HCT116 (cell line): ENCODE measurements at regions of chr9 and their contacts with region 1.

Region 1: DNA sequence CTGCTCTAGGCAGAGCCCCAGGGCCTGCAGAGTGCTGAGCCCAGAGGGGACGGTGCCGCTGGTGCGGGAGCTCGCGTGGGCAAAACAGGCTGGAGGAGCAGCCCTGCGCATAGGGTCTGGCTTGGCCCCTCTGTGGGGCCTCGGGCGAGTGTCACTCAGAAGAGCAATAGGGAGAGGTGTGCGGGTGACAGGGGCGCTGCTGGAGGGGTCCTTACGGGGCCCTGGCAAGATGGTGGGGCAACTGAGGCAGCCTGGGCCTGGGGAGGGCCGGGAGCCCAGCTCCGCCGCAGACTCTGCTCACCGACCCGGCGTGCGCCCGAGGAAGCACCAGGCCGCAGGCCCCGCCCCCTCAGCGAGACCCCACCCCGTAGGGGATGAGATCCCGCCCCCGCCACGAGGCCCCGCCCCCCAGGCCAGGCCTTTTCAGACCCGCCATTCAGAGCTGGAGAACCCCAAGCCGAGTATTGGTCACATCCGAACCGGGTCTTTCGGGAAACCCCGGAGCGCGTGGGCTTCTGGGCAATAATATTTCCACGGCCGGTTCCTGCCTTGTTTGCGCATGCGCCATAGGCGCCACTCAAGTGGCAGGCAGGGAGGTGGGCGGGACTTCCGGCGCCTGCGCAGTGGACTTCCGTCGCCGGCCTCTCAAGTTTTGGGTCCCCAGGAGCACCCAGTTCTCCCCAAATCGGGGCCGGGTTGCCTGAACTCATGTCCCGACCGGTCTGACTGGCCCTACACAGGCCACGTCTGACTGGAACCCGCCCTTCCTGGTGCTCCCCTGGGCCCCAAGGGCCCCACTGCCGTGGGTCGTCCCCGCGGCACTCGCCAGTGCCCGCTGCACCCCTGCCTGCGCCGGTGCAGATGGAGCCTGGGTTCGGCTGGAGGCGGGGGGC is 1.3 kb upstream of the RNF208 start:
- DNase-seq: peak; percentile 97
- ATAC-seq: peak; percentile 69
- H3K4me3 ChIP-seq: peak overlapping the region; percentile 82 to 99
- H3K27ac ChIP-seq: peak overlapping the region; percentile 98
- H3K4me1 ChIP-seq: peaks cover 48 to 79% of the 10 kb centered on the region in 2 experiments
- H3K27me3 ChIP-seq: no peaks in the 10 kb centered on the region
- CTCF ChIP-seq: no peak
- POLR2A ChIP-seq: peak; percentile 58
- RAD21 ChIP-seq: no peak

Region 2: DNA sequence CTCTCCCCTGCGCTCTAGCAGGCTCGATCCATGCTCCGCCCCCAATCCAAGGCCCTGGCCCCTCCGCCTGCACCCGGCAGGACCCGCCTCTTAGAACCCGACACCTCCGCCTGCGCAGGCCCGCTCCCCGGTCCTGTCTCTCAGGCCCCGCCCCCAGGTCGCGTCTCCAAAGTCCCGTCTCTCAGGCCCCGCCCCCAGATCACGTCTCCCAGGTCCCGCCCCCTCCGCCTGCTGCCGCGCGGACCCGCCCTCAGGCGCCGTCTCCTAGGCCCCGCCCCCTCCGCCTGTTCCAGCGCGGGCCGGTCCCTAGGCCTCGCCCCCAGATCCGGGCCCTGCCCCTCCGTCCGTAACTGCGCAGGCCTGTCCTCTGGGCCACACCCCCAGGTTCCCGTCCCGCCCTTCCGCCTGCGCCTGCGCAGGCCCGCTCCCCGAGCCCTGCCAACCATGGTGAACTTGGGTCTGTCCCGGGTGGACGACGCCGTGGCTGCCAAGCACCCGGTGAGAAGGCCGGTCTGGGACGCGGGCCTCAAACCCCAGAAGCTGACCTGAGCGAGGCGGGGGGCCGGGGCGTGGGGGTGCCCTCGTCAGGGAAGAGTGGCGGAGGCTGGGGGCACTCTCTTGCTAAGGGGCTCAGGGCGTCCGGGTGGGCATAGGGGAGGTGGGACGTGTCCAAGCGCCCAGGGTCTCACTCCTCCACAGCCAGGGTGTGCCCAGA is 432.2 kb before region 1 on chr9 and contains the start of gene TMEM141:
- CTCF ChIA-PET with region 1: no interaction called
- POLR2A ChIA-PET with region 1: no interaction called
- RAD21 ChIA-PET with region 1: no interaction called
- intact Hi-C with region 1: loop called (anchors 10 kb)
- DNase-seq: peak; percentile 98
- ATAC-seq: peak; percentile 88
- H3K4me3 ChIP-seq: peak within 1 kb of the TSS; percentile 83 to 84
- H3K27ac ChIP-seq: peak within 1 kb of the TSS; percentile 79
- H3K4me1 ChIP-seq: peaks cover 14 to 40% of the 10 kb centered on the region in 2 experiments; a peak in 3 of 4 replicates
- H3K27me3 ChIP-seq: no peaks in the 10 kb centered on the region
- CTCF ChIP-seq: no peak
- POLR2A ChIP-seq: peak; percentile 46
- RAD21 ChIP-seq: no peak
- total RNA-seq, gene TMEM141: 73.6 TPM

Region 3: DNA sequence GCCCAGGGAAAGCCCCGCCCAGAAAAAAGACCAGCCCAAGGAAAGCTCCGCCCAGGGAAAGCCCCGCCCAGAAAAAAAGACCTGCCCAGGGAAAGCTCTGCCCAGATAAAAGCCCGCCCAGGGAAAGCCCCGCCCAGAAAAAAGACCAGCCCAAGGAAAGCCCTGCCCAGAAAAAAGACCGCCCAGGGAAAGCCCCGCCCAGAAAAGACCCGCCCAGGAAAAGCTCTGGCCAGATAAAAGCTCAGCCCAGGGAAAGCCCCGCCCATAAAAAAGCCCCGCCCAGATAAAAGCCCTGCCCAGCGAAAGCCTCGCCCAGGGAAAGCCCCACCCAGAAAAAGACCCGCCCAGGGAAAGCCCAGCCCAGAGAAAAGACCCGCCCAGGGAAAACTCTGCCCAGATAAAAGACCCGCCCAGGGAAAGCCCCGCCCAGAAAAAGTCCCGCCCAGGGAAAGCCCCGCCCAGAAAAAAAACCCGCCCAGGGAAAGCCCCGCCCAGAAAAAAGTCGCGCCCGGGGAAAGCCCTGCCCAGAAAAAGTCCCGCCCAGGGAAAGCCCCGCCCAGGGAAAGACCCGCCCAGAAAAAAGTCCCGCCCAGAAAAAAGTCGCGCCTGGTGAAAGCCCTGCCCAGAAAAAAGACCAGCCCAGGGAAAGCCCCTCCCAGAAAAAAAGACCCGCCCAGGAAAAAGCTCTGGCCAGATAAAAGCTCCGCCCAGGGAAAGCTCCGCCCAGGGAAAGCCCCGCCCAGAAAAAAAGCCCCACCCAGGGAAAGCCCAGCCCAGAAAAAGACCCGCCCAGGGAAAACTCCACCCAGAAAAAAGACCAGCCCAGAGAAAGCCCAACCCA is 72.5 kb before region 1 on chr9:
- CTCF ChIA-PET with region 1: interaction called, 13 read pairs
- POLR2A ChIA-PET with region 1: no interaction called
- RAD21 ChIA-PET with region 1: no interaction called
- intact Hi-C with region 1: no loop called
- DNase-seq: peak; percentile 79
- ATAC-seq: peak; percentile 75
- H3K4me3 ChIP-seq: no peak overlapping the region
- H3K27ac ChIP-seq: peak overlapping the region; percentile 47; the same call in 1 of the 2 replicates
- H3K4me1 ChIP-seq: peaks cover 12 to 22% of the 10 kb centered on the region in 2 experiments
- H3K27me3 ChIP-seq: no peaks in the 10 kb centered on the region
- CTCF ChIP-seq: no peak
- POLR2A ChIP-seq: no peak
- RAD21 ChIP-seq: no peak

Region 4: GRCh38 chr9:137162505-137163100 is 60.7 kb before region 1 on chr9:
- CTCF ChIA-PET with region 1: interaction called, 8 read pairs
- POLR2A ChIA-PET with region 1: interaction called, 6 read pairs
- RAD21 ChIA-PET with region 1: interaction called, 3 read pairs
- intact Hi-C with region 1: loop called (anchors 2 kb)
- DNase-seq: no peak
- ATAC-seq: peak; percentile 50
- H3K4me3 ChIP-seq: peak overlapping the region; percentile 59 to 70
- H3K27ac ChIP-seq: peak overlapping the region; percentile 82
- H3K4me1 ChIP-seq: peaks cover 8 to 52% of the 10 kb centered on the region in 2 experiments; a peak in 3 of 4 replicates
- H3K27me3 ChIP-seq: no peaks in the 10 kb centered on the region
- CTCF ChIP-seq: no peak; a peak in 1 of 6 replicates
- POLR2A ChIP-seq: no peak
- RAD21 ChIP-seq: no peak

Region 5: DNA sequence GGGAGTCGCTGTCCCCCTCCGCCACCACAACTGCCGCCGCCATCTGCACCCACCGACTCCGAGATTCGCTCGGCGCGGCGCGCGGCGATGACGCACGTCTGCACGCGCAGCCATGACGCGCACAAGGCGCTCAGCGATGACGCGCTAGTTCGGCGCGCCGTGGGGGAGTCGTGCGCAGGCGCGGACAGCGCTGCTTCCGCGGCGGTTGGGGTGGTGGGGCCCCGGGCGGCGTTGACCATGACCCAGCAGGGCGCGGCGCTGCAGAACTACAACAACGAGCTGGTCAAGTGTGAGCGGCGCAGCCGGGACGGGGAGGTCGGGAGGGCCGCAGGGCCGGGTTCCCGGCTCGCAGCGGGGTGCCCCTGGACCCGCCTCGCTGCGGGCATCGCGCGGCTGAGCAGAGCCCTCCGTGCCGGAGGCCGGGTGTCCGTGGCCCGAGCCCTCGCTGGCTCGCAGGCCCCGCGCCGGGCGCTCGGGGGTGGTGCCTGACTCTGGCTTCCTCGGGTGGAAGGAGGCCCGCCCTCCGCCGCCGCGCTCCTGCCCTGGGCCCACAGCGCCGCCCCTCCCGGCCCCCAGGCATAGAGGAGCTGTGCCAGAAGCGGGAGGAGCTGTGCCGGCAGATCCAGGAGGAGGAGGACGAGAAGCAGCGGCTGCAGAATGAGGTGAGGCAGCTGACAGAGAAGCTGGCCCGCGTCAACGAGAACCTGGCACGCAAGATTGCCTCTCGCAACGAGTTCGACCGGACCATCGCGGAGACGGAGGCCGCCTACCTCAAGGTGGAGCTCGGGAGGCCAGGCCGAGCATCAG is 34.6 kb before region 1 on chr9 and contains the starts of genes ANAPC2 and SSNA1:
- CTCF ChIA-PET with region 1: interaction called, 17 read pairs
- POLR2A ChIA-PET with region 1: interaction called, 8 read pairs
- RAD21 ChIA-PET with region 1: interaction called, 7 to 9 read pairs
- intact Hi-C with region 1: loop called (anchors 5 kb)
- DNase-seq: peak; percentile 89
- ATAC-seq: peak; percentile 84
- H3K4me3 ChIP-seq: peak within 1 kb of the TSS; percentile 98 to 100
- H3K27ac ChIP-seq: peak within 1 kb of the TSS; percentile 99
- H3K4me1 ChIP-seq: peaks cover 16 to 33% of the 10 kb centered on the region in 2 experiments
- H3K27me3 ChIP-seq: no peaks in the 10 kb centered on the region
- CTCF ChIP-seq: peak in 2 of 3 experiments; percentile 32 to 38; a peak in 3 of 6 replicates
- POLR2A ChIP-seq: peak; percentile 90
- RAD21 ChIP-seq: no peak
- total RNA-seq, gene ANAPC2: 75.5 TPM
- total RNA-seq, gene SSNA1: 84.7 TPM

Region 6: DNA sequence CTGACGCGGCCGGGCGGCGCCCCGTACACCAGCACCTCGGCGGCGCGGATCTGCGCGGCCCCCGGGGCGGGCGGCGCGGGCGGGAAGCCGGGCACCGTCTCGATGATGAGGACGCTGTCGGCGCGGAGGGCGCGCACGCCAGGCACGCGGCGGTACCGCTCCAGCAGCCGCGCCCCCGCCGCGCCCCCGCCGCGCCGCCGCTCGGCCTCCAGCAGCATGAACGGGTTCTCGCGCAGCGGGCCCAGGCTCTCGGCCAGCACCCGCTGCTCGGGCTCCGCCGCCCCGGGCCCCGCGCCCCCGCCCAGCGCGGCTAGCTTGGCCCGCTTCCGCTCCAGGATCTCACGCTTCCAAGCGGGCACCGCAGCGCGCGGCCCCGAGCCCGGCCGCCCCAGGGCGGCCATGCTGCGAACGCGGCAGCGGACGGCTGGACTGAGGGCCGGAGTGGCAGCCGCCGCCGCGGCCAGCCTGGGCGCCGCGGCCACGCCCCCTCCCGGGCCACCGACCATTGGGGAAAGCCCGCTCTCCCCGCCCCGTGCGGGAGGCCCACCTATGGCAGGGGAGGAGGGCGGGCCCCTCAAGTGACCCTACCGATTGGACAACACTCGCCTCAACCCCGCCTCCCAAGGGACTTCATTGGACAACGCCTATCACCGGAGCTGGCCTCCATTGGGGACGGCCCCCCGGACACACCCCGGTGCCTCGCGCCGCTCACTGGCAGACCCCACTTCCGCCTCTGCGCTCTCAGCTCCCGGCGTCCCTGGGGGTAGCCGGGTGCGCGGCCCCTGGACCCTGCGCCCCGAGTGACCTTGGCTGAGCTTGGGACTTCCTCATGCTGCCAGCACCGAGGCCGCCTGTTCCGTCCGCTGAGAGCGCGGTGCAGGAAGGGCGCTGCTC is 22.8 kb before region 1 on chr9 and contains the start of gene TPRN:
- CTCF ChIA-PET with region 1: interaction called, 7 read pairs
- POLR2A ChIA-PET with region 1: interaction called, 7 read pairs
- RAD21 ChIA-PET with region 1: no interaction called
- intact Hi-C with region 1: loop called (anchors 2 kb)
- DNase-seq: peak; percentile 96
- ATAC-seq: peak; percentile 93
- H3K4me3 ChIP-seq: peak within 1 kb of the TSS; percentile 61 to 81
- H3K27ac ChIP-seq: peak within 1 kb of the TSS; percentile 85
- H3K4me1 ChIP-seq: peaks cover 32 to 54% of the 10 kb centered on the region in 2 experiments
- H3K27me3 ChIP-seq: no peaks in the 10 kb centered on the region
- CTCF ChIP-seq: no peak
- POLR2A ChIP-seq: peak; percentile 95
- RAD21 ChIP-seq: no peak
- total RNA-seq, gene TPRN: 24.9 TPM